ENCODE measurements at regions of chr21 and their contacts with region 1.

Region 1: GRCh38 chr21:35051287-35051818 is 2.3 kb upstream of the RUNX1 start:
- DNase-seq: peak; percentile 83 to 86 (median 84)
- H3K4me3 ChIP-seq: peak overlapping the region in 1 of 2 donors; percentile 4
- H3K4me3 Mint-ChIP-seq: peak overlapping the region; percentile 51 to 100 (median 94)
- H3K27ac ChIP-seq: peak overlapping the region; percentile 82
- H3K27ac Mint-ChIP-seq: peak overlapping the region; percentile 92 to 100 (median 99)
- H3K4me1 ChIP-seq: peaks cover 33% of the 10 kb centered on the region
- H3K4me1 Mint-ChIP-seq: peaks cover 26 to 55% (median 35%) of the 10 kb centered on the region in 4 donors
- H3K27me3 ChIP-seq: no peaks in the 10 kb centered on the region
- H3K27me3 Mint-ChIP-seq: peaks cover 1 to 3% of the 10 kb centered on the region in 2 donors

Region 2: GRCh38 chr21:33542640-33543504 is 1508.5 kb before region 1 on chr21 and contains the start of gene SON:
- CTCF ChIA-PET with region 1: no interaction called
- POLR2A ChIA-PET with region 1: no interaction called
- intact Hi-C with region 1: loop called (anchors 5 kb)
- DNase-seq: peak; percentile 96 to 99 (median 98)
- H3K4me3 ChIP-seq: peak within 1 kb of the TSS; percentile 87 to 96
- H3K4me3 Mint-ChIP-seq: peak within 1 kb of the TSS; percentile 96 to 100 (median 98)
- H3K27ac ChIP-seq: peak within 1 kb of the TSS; percentile 99
- H3K27ac Mint-ChIP-seq: peak within 1 kb of the TSS; percentile 98 to 100 (median 100)
- H3K4me1 ChIP-seq: peaks cover 52% of the 10 kb centered on the region
- H3K4me1 Mint-ChIP-seq: peaks cover 24 to 57% (median 36%) of the 10 kb centered on the region in 4 donors
- H3K27me3 ChIP-seq: no peaks in the 10 kb centered on the region
- H3K27me3 Mint-ChIP-seq: no peaks in the 10 kb centered on the region
- total RNA-seq, gene SON: 436 to 454 TPM

Region 3: DNA sequence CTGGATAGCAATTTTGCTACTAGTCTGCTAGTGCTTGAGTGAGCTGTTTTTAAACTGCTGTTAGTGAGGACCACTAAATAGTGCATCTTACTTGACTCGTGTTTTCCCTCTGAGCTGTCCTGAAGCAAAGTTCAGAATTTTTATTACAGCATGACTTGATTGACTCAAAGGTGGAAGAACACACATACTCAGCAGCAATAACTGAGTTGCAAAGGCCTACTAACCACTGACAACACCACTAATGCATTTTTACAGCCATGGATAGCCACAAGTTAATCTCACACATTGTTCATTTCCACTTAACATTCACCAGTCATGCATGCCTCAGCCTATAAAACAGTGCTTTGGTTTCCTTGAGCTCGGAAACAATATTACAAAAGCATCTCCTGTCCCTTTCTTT is 151.0 kb before region 1 on chr21:
- CTCF ChIA-PET with region 1: interaction called, 7 read pairs
- POLR2A ChIA-PET with region 1: interaction called, 280 read pairs
- intact Hi-C with region 1: no loop called
- DNase-seq: no peak
- H3K4me3 ChIP-seq: no peak overlapping the region
- H3K4me3 Mint-ChIP-seq: no peak overlapping the region
- H3K27ac ChIP-seq: no peak overlapping the region
- H3K27ac Mint-ChIP-seq: no peak overlapping the region
- H3K4me1 ChIP-seq: peaks cover 16% of the 10 kb centered on the region
- H3K4me1 Mint-ChIP-seq: peaks cover 31 to 45% (median 39%) of the 10 kb centered on the region in 4 donors
- H3K27me3 ChIP-seq: no peaks in the 10 kb centered on the region
- H3K27me3 Mint-ChIP-seq: no peaks in the 10 kb centered on the region

Region 4: DNA sequence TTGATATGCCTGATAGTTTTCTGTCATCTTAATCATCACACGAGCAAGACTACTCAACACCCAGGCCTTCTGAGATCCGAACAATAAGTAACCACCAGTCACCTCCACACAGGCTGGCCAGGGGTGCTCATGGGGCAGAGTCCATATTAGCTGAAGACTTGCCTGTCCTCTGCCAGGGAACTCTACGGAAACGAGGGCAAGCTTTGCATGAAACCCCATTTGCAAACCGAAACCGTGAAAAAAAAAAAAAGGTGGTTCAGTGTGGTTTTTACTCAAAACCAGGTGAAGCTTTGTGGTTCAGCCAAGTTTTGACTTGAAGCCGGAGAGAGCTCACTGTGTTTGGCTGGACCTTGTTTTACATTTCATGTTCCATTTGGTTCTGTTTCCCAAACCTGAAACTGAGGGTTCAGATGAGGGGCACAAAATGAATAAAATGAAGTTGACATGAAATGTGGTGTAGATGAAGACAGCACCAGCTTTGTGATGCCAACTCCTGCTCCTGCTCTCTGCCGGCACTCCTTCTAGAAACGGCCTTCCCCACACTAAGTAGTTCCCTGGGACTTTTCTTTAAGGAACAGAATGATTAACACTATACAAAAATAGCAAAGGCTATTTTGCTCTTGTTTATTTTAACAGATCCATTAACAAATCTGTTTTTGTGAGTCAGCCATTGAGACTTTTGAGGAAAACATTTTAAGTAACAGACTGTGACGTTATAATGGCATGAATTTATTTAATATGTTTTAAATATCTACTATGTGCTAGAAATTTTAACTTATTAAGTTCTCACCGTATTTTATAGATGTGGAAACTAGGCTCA is 77.0 kb before region 1 on chr21:
- CTCF ChIA-PET with region 1: interaction called, 7 read pairs
- POLR2A ChIA-PET with region 1: interaction called, 22 read pairs
- intact Hi-C with region 1: loop called (anchors 2 kb)
- DNase-seq: peak; percentile 74 to 81 (median 79)
- H3K4me3 ChIP-seq: peak overlapping the region in 1 of 2 donors; percentile 21
- H3K4me3 Mint-ChIP-seq: peak overlapping the region; percentile 38 to 92 (median 83)
- H3K27ac ChIP-seq: peak overlapping the region; percentile 37
- H3K27ac Mint-ChIP-seq: peak overlapping the region; percentile 84 to 98 (median 93)
- H3K4me1 ChIP-seq: peaks cover 82% of the 10 kb centered on the region
- H3K4me1 Mint-ChIP-seq: peaks cover 72 to 94% (median 82%) of the 10 kb centered on the region in 4 donors
- H3K27me3 ChIP-seq: no peaks in the 10 kb centered on the region
- H3K27me3 Mint-ChIP-seq: no peaks in the 10 kb centered on the region

Region 5: GRCh38 chr21:35020902-35021301 is 30.5 kb before region 1 on chr21:
- CTCF ChIA-PET with region 1: interaction called, 26 read pairs
- POLR2A ChIA-PET with region 1: interaction called, 729 read pairs
- intact Hi-C with region 1: loop called (anchors 1 kb)
- DNase-seq: no peak
- H3K4me3 ChIP-seq: no peak overlapping the region
- H3K4me3 Mint-ChIP-seq: peak overlapping the region in 4 of 8 donors; percentile 18 to 46 (median 44)
- H3K27ac ChIP-seq: peak overlapping the region; percentile 7
- H3K27ac Mint-ChIP-seq: peak overlapping the region; percentile 73 to 96 (median 82)
- H3K4me1 ChIP-seq: peaks cover 95% of the 10 kb centered on the region
- H3K4me1 Mint-ChIP-seq: peaks cover 74 to 94% (median 83%) of the 10 kb centered on the region in 4 donors
- H3K27me3 ChIP-seq: no peaks in the 10 kb centered on the region
- H3K27me3 Mint-ChIP-seq: no peaks in the 10 kb centered on the region

Region 6: GRCh38 chr21:35084869-35085268 is 33.5 kb after region 1 on chr21:
- CTCF ChIA-PET with region 1: no interaction called
- POLR2A ChIA-PET with region 1: no interaction called
- intact Hi-C with region 1: no loop called
- DNase-seq: no peak
- H3K4me3 ChIP-seq: no peak overlapping the region
- H3K4me3 Mint-ChIP-seq: no peak overlapping the region
- H3K27ac ChIP-seq: no peak overlapping the region
- H3K27ac Mint-ChIP-seq: no peak overlapping the region
- H3K4me1 ChIP-seq: no peaks in the 10 kb centered on the region
- H3K4me1 Mint-ChIP-seq: peaks cover 0 to 4% (median 1%) of the 10 kb centered on the region in 4 donors
- H3K27me3 ChIP-seq: no peaks in the 10 kb centered on the region
- H3K27me3 Mint-ChIP-seq: no peaks in the 10 kb centered on the region

Region 7: DNA sequence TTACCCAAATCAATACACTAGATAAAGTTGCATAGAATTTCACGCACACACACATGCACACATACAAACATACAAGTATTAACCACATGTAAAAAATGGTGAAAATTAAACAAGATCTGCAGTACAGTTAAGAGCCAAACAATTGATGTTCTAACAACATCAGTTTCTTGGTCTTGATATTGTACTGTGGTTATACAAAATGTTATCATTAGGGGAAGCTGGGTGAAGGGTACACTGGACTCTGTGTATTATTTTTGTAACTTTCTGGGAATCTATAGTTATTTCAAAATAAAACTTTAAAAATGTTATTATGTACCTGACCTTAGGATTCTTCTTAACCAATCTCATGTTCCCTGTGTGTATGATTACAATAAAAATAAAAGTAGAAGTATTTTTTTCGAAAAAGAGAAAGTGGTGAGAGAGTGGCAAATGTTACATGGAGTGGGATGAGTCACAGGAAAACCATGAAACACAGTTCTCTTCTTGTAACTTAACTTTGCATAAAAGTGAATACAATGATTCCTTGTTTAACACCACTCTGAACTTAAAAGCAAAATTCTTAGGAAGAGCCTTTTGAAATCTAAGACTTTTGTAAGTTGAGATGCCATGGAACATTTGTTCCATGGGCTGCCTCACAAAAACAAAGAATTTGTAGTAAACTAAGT is 99.3 kb after region 1 on chr21:
- CTCF ChIA-PET with region 1: no interaction called
- POLR2A ChIA-PET with region 1: no interaction called
- intact Hi-C with region 1: no loop called
- DNase-seq: no peak
- H3K4me3 ChIP-seq: no peak overlapping the region
- H3K4me3 Mint-ChIP-seq: no peak overlapping the region
- H3K27ac ChIP-seq: no peak overlapping the region
- H3K27ac Mint-ChIP-seq: no peak overlapping the region
- H3K4me1 ChIP-seq: no peaks in the 10 kb centered on the region
- H3K4me1 Mint-ChIP-seq: peaks cover 0 to 1% (median 0%) of the 10 kb centered on the region in 4 donors
- H3K27me3 ChIP-seq: no peaks in the 10 kb centered on the region
- H3K27me3 Mint-ChIP-seq: peaks cover 2% of the 10 kb centered on the region in 2 donors

Region 8: DNA sequence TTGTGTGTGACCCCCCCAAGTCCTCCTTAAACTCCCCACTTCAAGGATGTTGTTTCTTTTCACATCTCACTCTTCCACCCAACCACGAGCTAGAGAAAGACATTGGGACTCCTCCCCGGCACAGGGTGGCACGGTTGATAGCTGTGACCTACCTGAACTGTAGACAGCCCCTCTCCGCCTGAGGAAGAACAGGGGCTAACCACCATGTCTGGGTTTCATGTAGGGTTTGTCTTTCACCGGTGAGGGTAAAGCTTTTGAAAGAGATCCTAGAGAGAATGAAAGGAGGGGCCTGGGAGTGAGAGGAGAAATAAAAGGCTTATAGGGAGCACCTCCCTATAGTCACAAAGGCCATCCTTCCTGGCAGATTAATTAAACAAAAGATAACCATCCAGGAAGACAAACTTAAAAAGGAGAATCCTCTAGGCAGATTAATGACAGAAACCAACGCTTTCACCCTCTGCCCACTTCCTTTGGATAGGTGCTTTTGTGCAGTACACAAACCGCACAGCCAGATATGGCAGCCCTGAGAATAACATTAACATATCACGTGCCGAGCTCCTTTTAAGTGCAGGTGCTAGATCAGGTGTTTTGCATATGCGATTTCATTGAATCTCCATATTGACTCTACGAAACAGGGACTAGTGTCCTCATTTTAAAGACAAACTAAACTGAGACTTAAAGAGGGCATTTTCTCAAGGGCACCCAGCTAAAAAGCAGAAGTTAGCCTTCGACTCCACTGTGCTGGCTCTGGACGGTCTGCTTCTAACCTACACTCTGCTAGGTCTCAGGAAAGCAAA is 175.8 kb after region 1 on chr21:
- CTCF ChIA-PET with region 1: interaction called, 11 read pairs
- POLR2A ChIA-PET with region 1: interaction called, 9 read pairs
- intact Hi-C with region 1: loop called (anchors 1 kb)
- DNase-seq: peak; percentile 60 to 79 (median 69)
- H3K4me3 ChIP-seq: peak overlapping the region; percentile 34 to 48
- H3K4me3 Mint-ChIP-seq: peak overlapping the region; percentile 0 to 74 (median 58)
- H3K27ac ChIP-seq: no peak overlapping the region
- H3K27ac Mint-ChIP-seq: peak overlapping the region; percentile 72 to 92 (median 85)
- H3K4me1 ChIP-seq: peaks cover 37% of the 10 kb centered on the region
- H3K4me1 Mint-ChIP-seq: peaks cover 26 to 46% (median 36%) of the 10 kb centered on the region in 4 donors
- H3K27me3 ChIP-seq: no peaks in the 10 kb centered on the region
- H3K27me3 Mint-ChIP-seq: no peaks in the 10 kb centered on the region

Measured in CD4-positive, alpha-beta memory T cell (primary cell).